ENCODE measurements at regions of chr14 and their contacts with region 1.

Region 1: DNA sequence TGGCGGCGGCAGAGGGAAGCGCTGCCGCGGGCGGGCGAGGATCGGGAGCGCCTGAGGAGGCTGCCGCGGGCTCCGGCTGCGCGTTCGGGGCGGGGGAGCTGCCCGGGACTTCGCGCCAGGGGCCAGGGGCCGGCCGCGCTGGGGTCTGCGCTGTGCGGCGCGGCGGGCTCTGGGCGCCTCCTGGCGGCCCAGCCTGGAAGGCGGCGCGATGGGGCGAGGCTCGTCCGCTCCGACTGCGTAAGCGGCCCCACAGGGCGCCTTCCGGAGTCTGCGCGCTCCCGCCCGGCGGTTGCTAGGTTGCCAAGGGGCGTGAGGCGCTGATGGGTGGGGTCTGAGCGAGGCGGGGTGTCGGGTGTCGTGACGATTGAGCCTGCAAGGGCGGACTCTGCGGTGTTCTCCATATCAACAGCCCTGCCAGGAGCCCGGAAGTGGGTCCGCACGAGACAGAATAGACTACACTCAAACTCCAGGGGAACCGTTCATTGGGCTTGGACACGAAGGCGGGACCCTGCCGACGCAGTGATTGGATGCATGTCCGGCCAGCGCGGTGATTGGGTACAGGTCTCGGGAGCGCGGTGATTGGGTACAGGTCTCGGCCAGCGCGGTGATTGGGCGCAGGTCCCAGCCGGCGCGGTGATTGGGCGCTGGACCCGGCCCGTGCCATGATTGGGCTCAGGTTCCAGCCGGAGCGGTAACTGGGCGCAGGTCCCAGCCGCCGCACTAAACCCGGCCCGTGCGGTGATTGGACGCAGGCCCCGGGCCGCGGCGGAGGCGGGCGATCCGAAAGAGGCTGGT is at the start of gene TEDC1:
- DNase-seq: peak; percentile 99 to 100 (median 100)
- H3K4me3 ChIP-seq: peak within 1 kb of the TSS in 1 of 2 donors; percentile 79
- H3K4me3 Mint-ChIP-seq: peak within 1 kb of the TSS; percentile 85 to 94 (median 88)
- H3K27ac ChIP-seq: peak within 1 kb of the TSS; percentile 97
- H3K27ac Mint-ChIP-seq: peak within 1 kb of the TSS; percentile 91 to 99 (median 99)
- H3K4me1 ChIP-seq: peaks cover 33% of the 10 kb centered on the region
- H3K4me1 Mint-ChIP-seq: peaks cover 8 to 49% (median 19%) of the 10 kb centered on the region in 4 donors
- H3K27me3 ChIP-seq: no peaks in the 10 kb centered on the region
- H3K27me3 Mint-ChIP-seq: no peaks in the 10 kb centered on the region
- total RNA-seq, gene TEDC1: 25.4 to 30.2 TPM

Region 2: DNA sequence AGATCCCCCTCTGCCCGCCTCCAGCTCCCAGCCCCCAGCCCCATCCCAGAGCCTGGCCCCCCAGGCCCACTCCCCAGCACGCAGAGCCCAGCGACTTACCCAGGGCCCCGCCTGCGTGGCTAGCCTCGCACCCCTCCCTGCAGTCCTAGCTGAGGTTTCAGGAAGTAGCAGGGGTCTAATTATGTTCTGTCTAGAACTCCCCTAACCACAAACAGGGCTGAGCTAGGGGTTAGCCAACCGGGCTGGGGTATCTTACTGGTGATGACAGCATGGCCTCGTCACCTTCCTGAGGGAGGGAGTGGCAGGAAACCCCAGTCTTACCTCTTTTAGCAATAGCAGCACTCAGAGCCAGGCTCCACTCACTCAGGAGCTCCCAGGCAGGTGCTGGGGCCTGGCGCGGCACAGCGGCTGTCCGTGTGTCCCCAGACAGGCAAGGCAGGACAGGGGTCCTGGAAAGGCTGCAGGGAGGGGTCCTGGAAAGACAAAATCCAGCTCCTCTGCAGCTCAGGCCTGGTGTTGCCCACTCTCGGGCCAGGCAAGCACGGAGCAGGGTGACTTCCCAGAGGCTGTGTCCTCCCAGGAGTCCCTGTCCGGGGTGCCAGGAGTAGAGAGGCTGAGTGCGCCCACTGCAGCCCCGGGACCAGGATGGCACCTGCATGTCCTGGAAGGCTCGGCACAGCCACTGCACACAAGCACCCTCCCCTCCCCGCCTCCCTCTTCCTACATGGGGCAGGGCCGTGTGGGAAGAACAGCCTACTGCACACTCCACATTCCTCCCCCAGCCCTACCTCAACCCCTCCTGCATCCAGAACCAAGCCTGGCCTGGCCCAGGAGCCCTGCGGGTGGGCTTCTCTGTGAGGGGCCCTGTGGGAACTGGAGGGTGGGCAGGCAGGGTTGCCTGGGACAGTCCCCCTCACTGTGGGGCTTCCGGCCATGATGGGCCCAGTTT is 425.2 kb before region 1 on chr14 and contains the start of gene GPR132:
- CTCF ChIA-PET with region 1: no interaction called
- POLR2A ChIA-PET with region 1: interaction called, 4 read pairs
- intact Hi-C with region 1: loop called (anchors 2 kb)
- DNase-seq: peak; percentile 93 to 99 (median 96)
- H3K4me3 ChIP-seq: peak within 1 kb of the TSS; percentile 89 to 97
- H3K4me3 Mint-ChIP-seq: peak within 1 kb of the TSS; percentile 89 to 97 (median 95)
- H3K27ac ChIP-seq: peak within 1 kb of the TSS; percentile 93
- H3K27ac Mint-ChIP-seq: peak within 1 kb of the TSS; percentile 92 to 100 (median 99)
- H3K4me1 ChIP-seq: peaks cover 91% of the 10 kb centered on the region
- H3K4me1 Mint-ChIP-seq: peaks cover 34 to 85% (median 62%) of the 10 kb centered on the region in 4 donors
- H3K27me3 ChIP-seq: no peaks in the 10 kb centered on the region
- H3K27me3 Mint-ChIP-seq: no peaks in the 10 kb centered on the region
- total RNA-seq, gene GPR132: 47.3 to 49.2 TPM

Region 3: DNA sequence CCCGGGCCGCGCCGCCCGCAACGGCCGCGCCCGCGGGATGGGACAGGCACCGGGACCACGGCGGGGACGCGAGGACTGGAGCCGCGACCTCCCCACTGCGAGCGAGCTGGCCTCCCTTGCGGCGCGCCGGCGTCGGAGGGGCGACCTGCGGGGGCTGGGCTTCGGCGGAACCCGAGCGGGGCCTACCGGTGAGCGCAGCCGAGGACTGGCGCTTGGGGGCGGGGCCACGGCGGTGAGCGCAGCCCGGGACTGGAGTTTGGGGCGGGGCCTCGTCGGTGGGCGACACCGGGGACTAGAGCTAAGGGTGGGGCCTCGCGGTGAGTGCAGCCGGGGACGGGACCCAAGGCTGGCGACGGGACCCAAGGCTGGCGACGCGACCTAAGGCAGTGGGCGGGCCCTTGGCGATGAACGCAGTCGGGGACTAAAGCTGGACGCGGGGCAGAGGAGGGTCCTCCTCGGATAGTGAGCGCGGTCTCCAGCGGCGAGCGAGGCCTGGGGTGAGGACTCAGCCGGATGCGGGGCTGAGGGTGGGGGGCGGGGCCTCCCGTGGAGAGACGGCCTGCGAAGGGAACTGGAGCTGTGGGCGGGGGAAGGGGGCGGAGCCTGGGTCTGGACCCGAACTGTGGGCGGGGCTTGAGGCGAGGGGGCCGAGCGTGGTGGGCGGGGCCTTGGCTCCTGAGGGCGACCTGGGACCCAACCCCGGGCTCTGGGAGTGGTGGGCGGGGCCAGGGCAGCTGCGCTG is 189.8 kb before region 1 on chr14 and contains the start of gene BRF1:
- CTCF ChIA-PET with region 1: no interaction called
- POLR2A ChIA-PET with region 1: interaction called, 16 read pairs
- intact Hi-C with region 1: loop called (anchors 1 kb)
- DNase-seq: peak; percentile 97 to 99 (median 98)
- H3K4me3 ChIP-seq: peak within 1 kb of the TSS; percentile 65 to 80
- H3K4me3 Mint-ChIP-seq: peak within 1 kb of the TSS; percentile 88 to 95 (median 90)
- H3K27ac ChIP-seq: peak within 1 kb of the TSS; percentile 63
- H3K27ac Mint-ChIP-seq: peak within 1 kb of the TSS; percentile 80 to 98 (median 95)
- H3K4me1 ChIP-seq: peaks cover 23% of the 10 kb centered on the region
- H3K4me1 Mint-ChIP-seq: peaks cover 22 to 48% (median 30%) of the 10 kb centered on the region in 4 donors
- H3K27me3 ChIP-seq: no peaks in the 10 kb centered on the region
- H3K27me3 Mint-ChIP-seq: no peaks in the 10 kb centered on the region
- total RNA-seq, gene BRF1: 49.7 to 56.0 TPM

Region 4: GRCh38 chr14:105375635-105376057 is 115.1 kb before region 1 on chr14:
- CTCF ChIA-PET with region 1: interaction called, 94 read pairs
- POLR2A ChIA-PET with region 1: interaction called, 56 read pairs
- intact Hi-C with region 1: loop called (anchors 1 kb)
- DNase-seq: no peak
- H3K4me3 ChIP-seq: no peak overlapping the region
- H3K4me3 Mint-ChIP-seq: no peak overlapping the region
- H3K27ac ChIP-seq: no peak overlapping the region
- H3K27ac Mint-ChIP-seq: peak overlapping the region in 1 of 7 donors; percentile 44
- H3K4me1 ChIP-seq: no peaks in the 10 kb centered on the region
- H3K4me1 Mint-ChIP-seq: peaks cover 9 to 14% (median 12%) of the 10 kb centered on the region in 4 donors
- H3K27me3 ChIP-seq: no peaks in the 10 kb centered on the region
- H3K27me3 Mint-ChIP-seq: no peaks in the 10 kb centered on the region

Region 5: DNA sequence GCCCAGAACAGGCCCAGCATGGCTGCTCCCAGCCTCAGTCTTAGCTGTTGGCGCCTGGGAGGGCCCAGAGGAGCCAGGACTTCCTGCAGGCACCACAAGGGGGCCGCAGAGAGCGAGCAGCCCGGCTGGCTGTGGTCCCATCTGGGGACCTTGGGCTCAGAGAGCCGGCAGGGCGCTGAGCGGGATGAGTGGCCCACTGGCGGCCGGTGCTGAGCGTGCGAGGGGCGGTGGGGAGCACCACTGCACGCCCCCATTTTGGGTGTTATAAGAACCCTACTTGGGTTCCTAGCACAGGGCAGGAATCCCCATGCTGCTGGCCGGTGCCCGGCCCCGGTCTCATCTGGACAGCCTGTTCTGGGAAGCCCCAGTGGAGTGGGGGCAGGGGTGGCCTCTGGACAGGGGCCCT is 42.1 kb before region 1 on chr14:
- CTCF ChIA-PET with region 1: interaction called, 20 read pairs
- POLR2A ChIA-PET with region 1: interaction called, 29 read pairs
- intact Hi-C with region 1: loop called (anchors 1 kb)
- DNase-seq: peak; percentile 52 to 77 (median 64)
- H3K4me3 ChIP-seq: no peak overlapping the region
- H3K4me3 Mint-ChIP-seq: no peak overlapping the region
- H3K27ac ChIP-seq: no peak overlapping the region
- H3K27ac Mint-ChIP-seq: peak overlapping the region in 2 of 7 donors; percentile 15 to 42
- H3K4me1 ChIP-seq: no peaks in the 10 kb centered on the region
- H3K4me1 Mint-ChIP-seq: no peaks in the 10 kb centered on the region
- H3K27me3 ChIP-seq: no peaks in the 10 kb centered on the region
- H3K27me3 Mint-ChIP-seq: no peaks in the 10 kb centered on the region

Region 6: DNA sequence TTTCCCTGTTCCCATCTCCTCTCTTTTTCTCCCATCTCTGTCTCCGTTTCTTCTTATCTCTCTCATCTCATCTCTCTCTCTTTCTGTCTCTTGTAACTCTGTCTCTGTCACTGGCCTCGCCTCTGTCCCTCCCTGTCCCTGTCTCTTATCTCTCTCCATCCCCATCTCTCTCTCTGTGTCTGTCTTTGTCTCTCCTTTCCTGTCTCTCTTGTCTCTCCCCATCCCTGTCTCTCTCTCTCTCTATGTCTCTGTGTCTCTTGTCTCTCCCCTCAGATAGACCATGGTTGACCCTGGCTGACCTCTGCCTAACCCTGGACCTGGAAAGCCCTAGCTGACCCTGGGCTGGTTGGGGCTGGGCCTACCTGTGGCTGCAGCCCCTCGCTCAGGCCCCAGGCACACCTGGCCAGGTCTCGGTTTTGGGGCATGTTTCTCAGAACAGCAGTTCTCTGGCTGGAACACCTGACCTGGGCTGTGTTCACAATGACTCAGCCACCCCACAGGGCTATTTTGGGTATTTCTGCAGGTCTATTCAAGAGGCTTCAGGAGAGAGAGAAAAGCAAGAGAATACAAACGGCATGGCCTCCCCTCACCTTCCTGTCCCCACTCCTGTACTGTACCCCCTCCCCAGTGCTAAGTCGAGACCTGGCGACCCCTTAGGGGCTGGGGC is 210.0 kb after region 1 on chr14:
- CTCF ChIA-PET with region 1: no interaction called
- POLR2A ChIA-PET with region 1: no interaction called
- intact Hi-C with region 1: no loop called
- DNase-seq: no peak
- H3K4me3 ChIP-seq: no peak overlapping the region
- H3K4me3 Mint-ChIP-seq: no peak overlapping the region
- H3K27ac ChIP-seq: no peak overlapping the region
- H3K27ac Mint-ChIP-seq: peak overlapping the region in 1 of 7 donors; percentile 59
- H3K4me1 ChIP-seq: no peaks in the 10 kb centered on the region
- H3K4me1 Mint-ChIP-seq: peaks cover 0 to 2% (median 0%) of the 10 kb centered on the region in 4 donors
- H3K27me3 ChIP-seq: no peaks in the 10 kb centered on the region
- H3K27me3 Mint-ChIP-seq: peaks cover 5 to 6% of the 10 kb centered on the region in 2 donors

Region 7: GRCh38 chr14:105908481-105908911 is 417.7 kb after region 1 on chr14:
- CTCF ChIA-PET with region 1: no interaction called
- POLR2A ChIA-PET with region 1: no interaction called
- intact Hi-C with region 1: no loop called
- DNase-seq: no peak
- H3K4me3 ChIP-seq: no peak overlapping the region
- H3K4me3 Mint-ChIP-seq: no peak overlapping the region
- H3K27ac ChIP-seq: no peak overlapping the region
- H3K27ac Mint-ChIP-seq: no peak overlapping the region
- H3K4me1 ChIP-seq: no peaks in the 10 kb centered on the region
- H3K4me1 Mint-ChIP-seq: no peaks in the 10 kb centered on the region
- H3K27me3 ChIP-seq: no peaks in the 10 kb centered on the region
- H3K27me3 Mint-ChIP-seq: peaks cover 16 to 22% of the 10 kb centered on the region in 2 donors